ENCODE measurements at regions of chr10 and their contacts with region 1.

Region 1: DNA sequence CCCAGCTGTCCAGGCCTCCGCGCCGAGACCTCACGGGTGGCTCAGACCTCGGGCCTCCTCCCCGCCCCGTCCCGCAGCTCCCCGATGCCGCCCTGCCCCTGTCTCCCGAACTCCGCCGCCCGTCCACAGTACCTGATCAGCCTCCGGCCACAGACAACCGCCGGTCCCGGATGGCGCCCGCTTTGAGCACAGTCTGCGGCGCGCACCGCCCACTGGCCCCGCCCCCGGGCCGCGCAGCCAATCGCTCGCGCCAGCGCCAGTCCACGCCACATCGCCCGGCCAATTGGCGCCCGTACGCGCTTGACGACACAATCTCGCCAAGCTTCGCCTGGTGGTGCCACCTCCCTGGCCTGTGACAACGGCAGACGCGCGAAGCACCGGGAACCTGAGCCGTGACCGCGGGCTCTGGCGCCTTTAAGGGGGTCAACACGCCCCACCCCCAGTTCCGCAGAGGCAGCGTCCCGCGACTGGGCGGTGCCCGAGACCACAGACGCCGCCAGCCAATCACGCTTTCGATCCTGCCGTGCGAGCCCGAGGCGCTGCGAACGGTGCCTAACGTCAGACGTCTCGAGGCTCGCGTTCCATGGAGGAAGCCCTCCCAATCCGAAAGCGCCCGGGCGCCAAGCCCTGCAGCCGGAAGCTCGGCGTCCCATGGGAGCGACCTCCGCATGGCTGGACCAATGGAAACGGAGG is at the start of gene IDI1:
- DNase-seq: peak; percentile 97
- H3K4me3 Mint-ChIP-seq: peak within 1 kb of the TSS; percentile 93
- H3K27ac Mint-ChIP-seq: peak within 1 kb of the TSS; percentile 98
- H3K4me1 Mint-ChIP-seq: peaks cover 64% of the 10 kb centered on the region
- H3K27me3 Mint-ChIP-seq: no peaks in the 10 kb centered on the region
- total RNA-seq, gene IDI1: 83.1 to 83.8 TPM

Region 2: DNA sequence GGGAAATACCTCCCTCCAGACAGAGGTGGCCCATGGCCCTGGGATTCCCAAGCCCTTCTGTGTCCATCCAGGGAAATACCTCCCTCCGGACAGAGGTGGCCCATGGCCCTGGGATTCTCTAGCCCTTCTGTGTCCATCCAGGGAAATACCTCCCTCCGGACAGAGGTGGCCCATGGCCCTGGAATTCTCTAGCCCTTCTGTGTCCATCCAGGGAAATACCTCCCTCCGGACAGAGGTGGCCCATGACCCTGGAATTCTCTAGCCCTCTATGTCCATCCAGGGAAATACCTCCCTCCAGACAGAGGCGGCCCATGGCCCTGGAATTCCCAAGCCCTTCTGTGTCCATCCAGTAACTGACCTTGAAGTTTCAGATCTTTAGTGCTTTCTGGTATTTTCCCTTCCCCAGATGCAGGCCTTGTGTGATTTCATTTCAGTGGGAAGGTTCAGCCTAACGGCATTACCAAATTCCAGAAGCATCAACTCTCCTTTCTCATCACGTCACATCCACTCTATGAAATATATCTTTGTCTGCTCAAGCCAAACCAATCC is 330.7 kb before region 1 on chr10:
- CTCF ChIA-PET with region 1: no interaction called
- POLR2A ChIA-PET with region 1: no interaction called
- intact Hi-C with region 1: no loop called
- DNase-seq: no peak
- H3K4me3 Mint-ChIP-seq: no peak overlapping the region
- H3K27ac Mint-ChIP-seq: no peak overlapping the region
- H3K4me1 Mint-ChIP-seq: no peaks in the 10 kb centered on the region
- H3K27me3 Mint-ChIP-seq: peaks cover 13% of the 10 kb centered on the region

Region 3: DNA sequence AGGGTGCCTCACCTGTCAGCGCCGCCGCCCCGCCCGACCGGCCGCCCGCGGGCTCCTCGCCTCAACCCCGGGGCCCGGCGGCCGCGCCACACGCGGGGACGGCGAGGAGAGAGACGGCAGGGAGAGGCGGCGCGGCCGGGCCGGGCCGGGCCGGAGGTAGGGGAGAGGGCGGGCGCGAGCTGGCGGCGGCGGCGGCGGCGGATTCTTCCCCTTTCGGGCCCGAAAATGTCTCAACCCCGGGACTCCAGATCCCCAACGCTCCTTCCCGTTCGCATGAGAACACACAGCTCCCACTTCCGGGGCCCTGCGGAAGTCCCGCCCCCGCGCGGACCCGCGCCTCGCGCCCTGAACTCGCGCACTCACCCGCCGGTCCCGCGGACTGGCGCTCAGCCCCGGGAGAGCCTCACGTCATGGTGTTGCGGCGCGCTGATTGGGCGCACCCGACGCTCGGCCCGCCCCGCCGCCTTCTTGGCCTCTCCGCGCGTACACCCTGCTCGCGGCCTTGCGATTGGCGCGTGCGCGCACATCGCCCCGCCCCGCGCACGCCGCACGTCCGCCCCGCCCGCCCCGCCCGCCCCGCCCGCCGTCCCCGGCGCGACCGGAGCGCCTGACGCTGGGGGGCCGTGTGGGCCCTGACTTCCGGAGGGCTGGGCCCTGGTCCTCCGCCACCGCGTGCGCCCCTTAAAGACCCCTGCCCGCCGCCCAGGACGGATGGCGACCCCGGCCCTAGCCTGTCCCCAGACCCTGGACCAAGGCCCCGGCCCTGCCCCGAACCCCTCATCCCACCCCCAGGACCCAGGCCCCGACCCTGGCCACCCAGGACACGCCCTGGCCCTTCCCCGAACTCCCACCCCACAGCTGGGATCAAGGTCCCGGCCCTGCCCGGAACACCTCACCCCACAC is 117.2 kb before region 1 on chr10 and contains the start of gene LARP4B:
- CTCF ChIA-PET with region 1: no interaction called
- POLR2A ChIA-PET with region 1: interaction called, 4 read pairs
- intact Hi-C with region 1: loop called (anchors 1 kb)
- DNase-seq: peak; percentile 98
- H3K4me3 Mint-ChIP-seq: peak within 1 kb of the TSS; percentile 88
- H3K27ac Mint-ChIP-seq: peak within 1 kb of the TSS; percentile 87
- H3K4me1 Mint-ChIP-seq: peaks cover 35% of the 10 kb centered on the region
- H3K27me3 Mint-ChIP-seq: no peaks in the 10 kb centered on the region
- total RNA-seq, gene LARP4B: 92.1 to 95.0 TPM

Region 4: GRCh38 chr10:987870-988666 is 60.8 kb before region 1 on chr10 and contains the start of gene GTPBP4:
- CTCF ChIA-PET with region 1: interaction called, 6 read pairs
- POLR2A ChIA-PET with region 1: interaction called, 6 read pairs
- intact Hi-C with region 1: loop called (anchors 1 kb)
- DNase-seq: peak; percentile 98
- H3K4me3 Mint-ChIP-seq: peak within 1 kb of the TSS; percentile 93
- H3K27ac Mint-ChIP-seq: peak within 1 kb of the TSS; percentile 92
- H3K4me1 Mint-ChIP-seq: peaks cover 34% of the 10 kb centered on the region
- H3K27me3 Mint-ChIP-seq: no peaks in the 10 kb centered on the region
- total RNA-seq, gene GTPBP4: 107 TPM

Region 5: GRCh38 chr10:1036341-1036791 is 12.5 kb before region 1 on chr10:
- CTCF ChIA-PET with region 1: no interaction called
- POLR2A ChIA-PET with region 1: interaction called, 14 read pairs
- intact Hi-C with region 1: loop called (anchors 1 kb)
- DNase-seq: peak; percentile 75
- H3K4me3 Mint-ChIP-seq: no peak overlapping the region
- H3K27ac Mint-ChIP-seq: peak overlapping the region; percentile 73
- H3K4me1 Mint-ChIP-seq: peaks cover 19% of the 10 kb centered on the region
- H3K27me3 Mint-ChIP-seq: no peaks in the 10 kb centered on the region

Region 6: GRCh38 chr10:1094112-1095057 is 45.5 kb after region 1 on chr10:
- CTCF ChIA-PET with region 1: no interaction called
- POLR2A ChIA-PET with region 1: no interaction called
- intact Hi-C with region 1: loop called (anchors 2 kb)
- DNase-seq: peak; percentile 92
- H3K4me3 Mint-ChIP-seq: no peak overlapping the region
- H3K27ac Mint-ChIP-seq: no peak overlapping the region
- H3K4me1 Mint-ChIP-seq: peaks cover 4% of the 10 kb centered on the region
- H3K27me3 Mint-ChIP-seq: no peaks in the 10 kb centered on the region

Measured in activated CD4-positive, alpha-beta memory T cell treated with anti-CD3 and anti-CD28 coated beads for 36 hours (primary cell).